Mammary epithelial cell (primary cell): ENCODE measurements at regions of chr6 and their contacts with region 1.

Region 1: GRCh38 chr6:34027445-34027936 is 118.4 kb downstream of the GRM4 start:
- DNase-seq: peak; percentile 11
- H3K4me3 ChIP-seq: no peak overlapping the region
- H3K27ac ChIP-seq: no peak overlapping the region
- H3K4me1 ChIP-seq: no peaks in the 10 kb centered on the region
- H3K27me3 ChIP-seq: no peaks in the 10 kb centered on the region
- CTCF ChIP-seq: peak; percentile 58 to 85

Region 2: DNA sequence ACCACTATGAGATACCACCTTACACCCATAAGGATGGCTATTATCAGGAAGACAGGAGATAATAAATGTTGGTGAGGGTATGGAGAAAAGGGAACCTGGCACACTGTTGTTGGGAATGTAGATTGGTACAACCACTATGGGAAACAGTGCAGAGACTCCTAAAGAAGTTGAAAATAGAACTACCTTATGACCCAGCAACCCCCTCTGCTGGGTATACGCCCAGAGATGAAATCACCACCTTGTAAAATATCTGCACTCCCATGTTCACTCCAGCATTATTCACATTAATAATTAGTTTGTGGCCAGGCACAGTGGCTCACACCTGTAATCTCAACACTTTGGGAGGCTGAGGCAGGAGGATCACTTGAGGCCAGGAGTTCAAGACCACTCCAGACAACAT is 546.3 kb before region 1 on chr6:
- CTCF ChIA-PET with region 1: interaction called, 12 read pairs
- dilution Hi-C with region 1: no loop called
- in situ Hi-C with region 1: no loop called
- intact Hi-C with region 1: no loop called
- DNase-seq: no peak
- H3K4me3 ChIP-seq: no peak overlapping the region
- H3K27ac ChIP-seq: no peak overlapping the region
- H3K4me1 ChIP-seq: no peaks in the 10 kb centered on the region
- H3K27me3 ChIP-seq: no peaks in the 10 kb centered on the region
- CTCF ChIP-seq: no peak